Activated CD8-positive, alpha-beta memory T cell treated with anti-CD3 and anti-CD28 coated beads, Interleukin-2, amount 10 ng/mL, durations not matched to agents 7 days and 5 days (primary cell): ENCODE measurements at regions of chr10 and their contacts with region 1.

Region 1: GRCh38 chr10:112375721-112376395 is 1.9 kb downstream of the ACSL5 start:
- DNase-seq: peak; percentile 72
- ATAC-seq: peak; percentile 91
- H3K4me3 Mint-ChIP-seq: peak overlapping the region; percentile 96
- H3K27ac Mint-ChIP-seq: peak overlapping the region; percentile 100
- H3K4me1 Mint-ChIP-seq: peaks cover 62% of the 10 kb centered on the region
- H3K27me3 Mint-ChIP-seq: no peaks in the 10 kb centered on the region

Region 2: DNA sequence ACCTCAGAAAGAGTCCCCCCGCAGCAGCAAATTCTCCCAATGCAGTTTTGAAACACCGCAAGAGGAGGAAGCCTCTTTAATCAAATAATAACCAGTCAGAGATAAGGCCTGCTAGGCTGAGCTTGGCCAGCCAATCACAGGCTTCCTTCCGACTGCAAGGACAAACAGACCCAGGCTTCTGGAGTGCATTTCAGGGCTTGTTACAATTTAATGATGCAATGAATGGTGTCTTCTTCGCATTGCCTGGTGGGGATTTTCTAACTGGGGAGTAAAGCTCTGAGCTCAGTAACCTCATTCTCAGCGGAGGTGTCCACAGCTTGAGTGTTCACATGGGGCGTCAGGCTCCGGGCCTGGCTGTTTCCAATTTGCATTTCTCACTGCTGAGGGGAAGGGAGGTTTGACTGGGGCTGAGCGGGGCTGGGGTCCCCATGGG is 160.5 kb before region 1 on chr10:
- CTCF ChIA-PET with region 1: no interaction called
- DNase-seq: no peak
- ATAC-seq: no peak
- H3K4me3 Mint-ChIP-seq: no peak overlapping the region
- H3K27ac Mint-ChIP-seq: no peak overlapping the region
- H3K4me1 Mint-ChIP-seq: peaks cover 2% of the 10 kb centered on the region
- H3K27me3 Mint-ChIP-seq: peaks cover 7% of the 10 kb centered on the region

Region 3: DNA sequence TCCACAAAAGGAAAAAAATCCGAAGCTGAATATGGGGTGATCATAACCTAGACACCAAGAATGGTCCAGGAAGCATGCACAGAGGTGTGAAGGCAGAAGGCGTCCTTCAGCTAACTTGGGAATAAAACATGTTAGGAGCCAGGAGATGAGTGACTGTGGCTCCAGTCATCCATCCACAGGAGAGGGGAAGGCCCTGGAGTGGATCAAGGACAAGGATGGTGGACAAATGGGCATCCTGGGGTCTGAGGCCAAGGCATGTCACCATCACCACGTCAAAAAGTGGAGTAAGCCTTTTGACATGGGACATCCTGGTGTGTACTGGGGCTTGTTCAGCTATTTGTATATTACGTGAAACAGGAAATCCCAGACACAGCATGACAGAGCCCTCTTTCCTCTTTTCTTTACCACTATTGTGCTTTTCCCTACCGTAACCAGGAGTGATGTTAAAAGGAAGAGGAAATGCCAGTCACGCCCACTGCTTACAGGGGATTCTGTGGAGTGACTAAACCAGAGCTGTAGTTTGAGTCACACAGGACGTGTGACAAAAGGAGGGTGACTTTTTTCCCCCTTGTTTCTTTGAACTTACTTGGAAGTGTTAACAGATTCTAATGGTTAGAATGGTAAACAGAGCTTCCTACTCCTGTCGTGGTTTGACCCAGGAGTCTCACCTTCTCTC is 13.4 kb after region 1 on chr10:
- CTCF ChIA-PET with region 1: interaction called, 16 read pairs
- DNase-seq: peak; percentile 78
- ATAC-seq: peak; percentile 87
- H3K4me3 Mint-ChIP-seq: peak overlapping the region; percentile 29
- H3K27ac Mint-ChIP-seq: peak overlapping the region; percentile 80
- H3K4me1 Mint-ChIP-seq: peaks cover 41% of the 10 kb centered on the region
- H3K27me3 Mint-ChIP-seq: no peaks in the 10 kb centered on the region